Naive thymus-derived CD4-positive, alpha-beta T cell (primary cell): ENCODE measurements at regions of chr6 and their contacts with region 1.

Region 1: DNA sequence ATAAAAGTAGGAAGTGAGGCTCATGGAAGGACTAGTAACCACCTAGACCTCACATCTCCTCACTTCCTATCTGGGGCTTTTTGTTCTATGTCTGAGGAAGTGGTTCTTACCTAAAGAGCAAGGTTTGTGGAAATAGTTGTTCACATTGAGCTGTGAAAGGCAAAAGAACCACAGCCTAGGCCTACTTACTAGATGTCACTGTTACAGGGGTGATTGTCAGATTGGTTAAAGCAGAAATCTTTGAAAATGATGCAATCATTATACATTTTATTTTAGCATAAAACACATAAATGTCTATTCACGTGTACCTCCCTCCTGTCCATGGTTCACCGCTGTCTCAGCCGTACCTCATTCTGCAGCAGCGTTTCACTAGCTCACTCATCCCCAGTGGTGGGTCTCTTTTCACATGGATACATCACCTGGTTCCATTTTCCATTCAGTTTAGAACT is 268.8 kb downstream of the TMEM242 start:
- DNase-seq: peak in 7 of 9 donors; percentile 60 to 83 (median 78)
- ATAC-seq: peak; percentile 97
- H3K4me3 ChIP-seq: peak overlapping the region; percentile 19
- H3K4me3 Mint-ChIP-seq: peak overlapping the region; percentile 37 to 73 (median 58)
- H3K27ac ChIP-seq: peak overlapping the region; percentile 60
- H3K27ac Mint-ChIP-seq: peak overlapping the region; percentile 81 to 94 (median 88)
- H3K4me1 ChIP-seq: peaks cover 27 to 31% of the 10 kb centered on the region in 2 donors
- H3K4me1 Mint-ChIP-seq: peaks cover 34 to 73% (median 57%) of the 10 kb centered on the region in 7 donors
- H3K27me3 ChIP-seq: no peaks in the 10 kb centered on the region
- H3K27me3 Mint-ChIP-seq: no peaks in the 10 kb centered on the region

Region 2: GRCh38 chr6:156718647-156719046 is 335.9 kb before region 1 on chr6:
- CTCF ChIA-PET with region 1: no interaction called
- POLR2A ChIA-PET with region 1: no interaction called
- intact Hi-C with region 1: no loop called
- DNase-seq: no peak
- ATAC-seq: no peak
- H3K4me3 ChIP-seq: no peak overlapping the region
- H3K4me3 Mint-ChIP-seq: peak overlapping the region in 5 of 10 donors; percentile 7 to 57 (median 36)
- H3K27ac ChIP-seq: no peak overlapping the region
- H3K27ac Mint-ChIP-seq: peak overlapping the region in 4 of 9 donors; percentile 8 to 95 (median 44)
- H3K4me1 ChIP-seq: peaks cover 6 to 15% of the 10 kb centered on the region in 2 donors
- H3K4me1 Mint-ChIP-seq: peaks cover 7 to 22% (median 16%) of the 10 kb centered on the region in 7 donors
- H3K27me3 ChIP-seq: no peaks in the 10 kb centered on the region
- H3K27me3 Mint-ChIP-seq: peaks cover 0 to 18% (median 0%) of the 10 kb centered on the region in 5 donors

Region 3: GRCh38 chr6:156876302-156876701 is 178.3 kb before region 1 on chr6:
- CTCF ChIA-PET with region 1: no interaction called
- POLR2A ChIA-PET with region 1: no interaction called
- intact Hi-C with region 1: no loop called
- DNase-seq: no peak
- ATAC-seq: no peak
- H3K4me3 ChIP-seq: no peak overlapping the region
- H3K4me3 Mint-ChIP-seq: no peak overlapping the region
- H3K27ac ChIP-seq: no peak overlapping the region
- H3K27ac Mint-ChIP-seq: no peak overlapping the region
- H3K4me1 ChIP-seq: peaks cover 0 to 16% of the 10 kb centered on the region in 2 donors
- H3K4me1 Mint-ChIP-seq: peaks cover 20 to 95% (median 80%) of the 10 kb centered on the region in 7 donors
- H3K27me3 ChIP-seq: no peaks in the 10 kb centered on the region
- H3K27me3 Mint-ChIP-seq: no peaks in the 10 kb centered on the region

Region 4: DNA sequence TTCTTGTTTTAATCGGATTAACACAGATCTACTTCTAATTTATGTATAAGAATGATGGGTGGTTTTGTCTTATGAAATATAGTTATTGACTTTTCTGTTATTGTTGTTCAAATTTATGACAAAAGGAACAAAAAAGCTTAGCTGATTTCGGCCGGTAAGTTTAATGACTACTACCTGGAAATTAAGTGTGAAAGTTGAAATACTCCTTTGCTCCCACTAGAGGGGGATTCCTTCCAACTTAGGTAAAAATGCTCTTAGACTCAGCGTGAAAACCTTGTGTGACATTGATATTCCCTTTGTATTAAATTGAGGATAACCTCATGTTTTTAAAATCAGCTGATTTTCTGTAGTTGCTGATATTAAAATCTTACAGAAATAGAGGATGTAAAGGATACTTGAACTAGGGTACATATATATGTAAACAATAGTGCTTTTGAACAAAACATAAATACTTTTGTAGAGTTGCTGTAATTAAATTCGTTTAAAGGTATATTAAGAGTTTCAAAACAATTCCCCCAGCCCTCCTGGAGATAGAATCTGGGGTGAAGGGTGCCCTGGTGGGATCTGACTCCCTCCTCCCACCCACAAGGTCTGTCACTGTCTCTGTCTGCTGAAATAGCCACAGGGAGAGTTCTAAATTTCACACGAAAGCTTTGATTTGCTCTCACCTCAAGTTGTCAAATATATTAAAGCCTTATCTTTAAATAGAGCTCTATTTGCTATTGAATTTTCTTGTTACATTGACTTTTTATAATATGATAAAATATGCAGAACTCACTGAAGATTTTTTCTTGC is 19.9 kb before region 1 on chr6:
- CTCF ChIA-PET with region 1: interaction called, 4 read pairs
- POLR2A ChIA-PET with region 1: no interaction called
- intact Hi-C with region 1: loop called in 1 of 2 experiments (anchors 2 kb)
- DNase-seq: peak in 6 of 9 donors; percentile 43 to 57 (median 52)
- ATAC-seq: peak; percentile 85
- H3K4me3 ChIP-seq: no peak overlapping the region
- H3K4me3 Mint-ChIP-seq: peak overlapping the region; percentile 44 to 99 (median 84)
- H3K27ac ChIP-seq: peak overlapping the region; percentile 77
- H3K27ac Mint-ChIP-seq: peak overlapping the region; percentile 44 to 95 (median 84)
- H3K4me1 ChIP-seq: peaks cover 6 to 20% of the 10 kb centered on the region in 2 donors
- H3K4me1 Mint-ChIP-seq: peaks cover 22 to 38% (median 27%) of the 10 kb centered on the region in 7 donors
- H3K27me3 ChIP-seq: no peaks in the 10 kb centered on the region
- H3K27me3 Mint-ChIP-seq: no peaks in the 10 kb centered on the region

Region 5: GRCh38 chr6:157068691-157069324 is 14.3 kb after region 1 on chr6:
- CTCF ChIA-PET with region 1: no interaction called
- POLR2A ChIA-PET with region 1: interaction called, 4 read pairs
- intact Hi-C with region 1: loop called in 1 of 2 experiments (anchors 1 kb)
- DNase-seq: no peak
- ATAC-seq: no peak
- H3K4me3 ChIP-seq: no peak overlapping the region
- H3K4me3 Mint-ChIP-seq: peak overlapping the region in 8 of 10 donors; percentile 2 to 62 (median 41)
- H3K27ac ChIP-seq: no peak overlapping the region
- H3K27ac Mint-ChIP-seq: peak overlapping the region in 4 of 9 donors; percentile 10 to 82 (median 69)
- H3K4me1 ChIP-seq: peaks cover 4 to 11% of the 10 kb centered on the region in 2 donors
- H3K4me1 Mint-ChIP-seq: peaks cover 25 to 84% (median 76%) of the 10 kb centered on the region in 7 donors
- H3K27me3 ChIP-seq: no peaks in the 10 kb centered on the region
- H3K27me3 Mint-ChIP-seq: no peaks in the 10 kb centered on the region

Region 6: GRCh38 chr6:157075549-157076450 is 21.2 kb after region 1 on chr6:
- CTCF ChIA-PET with region 1: no interaction called
- POLR2A ChIA-PET with region 1: no interaction called
- intact Hi-C with region 1: loop called in 1 of 2 experiments (anchors 1 kb)
- DNase-seq: no peak
- ATAC-seq: no peak
- H3K4me3 ChIP-seq: no peak overlapping the region
- H3K4me3 Mint-ChIP-seq: peak overlapping the region in 8 of 10 donors; percentile 19 to 80 (median 48)
- H3K27ac ChIP-seq: no peak overlapping the region
- H3K27ac Mint-ChIP-seq: peak overlapping the region in 5 of 9 donors; percentile 4 to 82 (median 66)
- H3K4me1 ChIP-seq: peaks cover 0 to 7% of the 10 kb centered on the region in 2 donors
- H3K4me1 Mint-ChIP-seq: peaks cover 23 to 77% (median 72%) of the 10 kb centered on the region in 7 donors
- H3K27me3 ChIP-seq: no peaks in the 10 kb centered on the region
- H3K27me3 Mint-ChIP-seq: no peaks in the 10 kb centered on the region

Region 7: GRCh38 chr6:157099912-157100593 is 45.5 kb after region 1 on chr6:
- CTCF ChIA-PET with region 1: no interaction called
- POLR2A ChIA-PET with region 1: interaction called, 5 read pairs
- intact Hi-C with region 1: loop called (anchors 1 kb)
- DNase-seq: peak in 8 of 9 donors; percentile 40 to 64 (median 54)
- ATAC-seq: peak; percentile 97
- H3K4me3 ChIP-seq: peak overlapping the region; percentile 20
- H3K4me3 Mint-ChIP-seq: peak overlapping the region; percentile 8 to 89 (median 77)
- H3K27ac ChIP-seq: peak overlapping the region; percentile 60
- H3K27ac Mint-ChIP-seq: peak overlapping the region; percentile 85 to 95 (median 92)
- H3K4me1 ChIP-seq: peaks cover 22% of the 10 kb centered on the region in 2 donors
- H3K4me1 Mint-ChIP-seq: peaks cover 22 to 90% (median 79%) of the 10 kb centered on the region in 7 donors
- H3K27me3 ChIP-seq: no peaks in the 10 kb centered on the region
- H3K27me3 Mint-ChIP-seq: no peaks in the 10 kb centered on the region

Region 8: DNA sequence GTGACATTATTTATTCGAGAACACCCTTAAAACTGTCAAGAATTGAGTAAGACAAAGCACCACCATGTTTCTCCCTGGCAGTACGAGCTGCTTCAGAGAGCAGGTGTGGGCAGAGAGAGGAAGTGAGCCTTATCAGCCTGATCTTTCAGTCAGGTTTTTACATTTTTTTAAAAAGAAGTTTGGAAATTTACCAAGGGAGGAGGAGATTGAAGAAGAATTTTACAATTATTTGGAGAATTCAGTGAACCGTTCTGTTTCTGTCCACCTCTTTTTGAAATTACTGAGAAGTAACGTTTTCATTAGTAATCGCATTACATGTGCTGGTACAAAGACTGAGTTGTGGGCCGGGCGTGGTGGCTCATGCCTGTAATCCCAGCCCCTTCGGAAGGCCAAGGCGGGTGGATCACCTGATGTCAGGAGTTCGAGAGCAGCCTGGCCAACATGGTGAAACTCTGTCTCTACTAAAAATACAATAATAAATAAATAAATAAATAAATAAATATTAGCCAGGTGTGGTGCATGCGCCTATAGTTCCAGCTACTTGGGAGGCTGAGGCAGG is 402.0 kb after region 1 on chr6:
- CTCF ChIA-PET with region 1: no interaction called
- POLR2A ChIA-PET with region 1: no interaction called
- intact Hi-C with region 1: no loop called
- DNase-seq: peak in 5 of 9 donors; percentile 12 to 39 (median 20)
- ATAC-seq: no peak
- H3K4me3 ChIP-seq: no peak overlapping the region
- H3K4me3 Mint-ChIP-seq: peak overlapping the region in 9 of 10 donors; percentile 4 to 75 (median 39)
- H3K27ac ChIP-seq: no peak overlapping the region
- H3K27ac Mint-ChIP-seq: peak overlapping the region in 5 of 9 donors; percentile 42 to 76 (median 63)
- H3K4me1 ChIP-seq: peaks cover 7 to 10% of the 10 kb centered on the region in 2 donors
- H3K4me1 Mint-ChIP-seq: peaks cover 6 to 54% (median 14%) of the 10 kb centered on the region in 7 donors
- H3K27me3 ChIP-seq: no peaks in the 10 kb centered on the region
- H3K27me3 Mint-ChIP-seq: no peaks in the 10 kb centered on the region